ENCODE measurements at regions of chr6 and their contacts with region 1.

Region 1: DNA sequence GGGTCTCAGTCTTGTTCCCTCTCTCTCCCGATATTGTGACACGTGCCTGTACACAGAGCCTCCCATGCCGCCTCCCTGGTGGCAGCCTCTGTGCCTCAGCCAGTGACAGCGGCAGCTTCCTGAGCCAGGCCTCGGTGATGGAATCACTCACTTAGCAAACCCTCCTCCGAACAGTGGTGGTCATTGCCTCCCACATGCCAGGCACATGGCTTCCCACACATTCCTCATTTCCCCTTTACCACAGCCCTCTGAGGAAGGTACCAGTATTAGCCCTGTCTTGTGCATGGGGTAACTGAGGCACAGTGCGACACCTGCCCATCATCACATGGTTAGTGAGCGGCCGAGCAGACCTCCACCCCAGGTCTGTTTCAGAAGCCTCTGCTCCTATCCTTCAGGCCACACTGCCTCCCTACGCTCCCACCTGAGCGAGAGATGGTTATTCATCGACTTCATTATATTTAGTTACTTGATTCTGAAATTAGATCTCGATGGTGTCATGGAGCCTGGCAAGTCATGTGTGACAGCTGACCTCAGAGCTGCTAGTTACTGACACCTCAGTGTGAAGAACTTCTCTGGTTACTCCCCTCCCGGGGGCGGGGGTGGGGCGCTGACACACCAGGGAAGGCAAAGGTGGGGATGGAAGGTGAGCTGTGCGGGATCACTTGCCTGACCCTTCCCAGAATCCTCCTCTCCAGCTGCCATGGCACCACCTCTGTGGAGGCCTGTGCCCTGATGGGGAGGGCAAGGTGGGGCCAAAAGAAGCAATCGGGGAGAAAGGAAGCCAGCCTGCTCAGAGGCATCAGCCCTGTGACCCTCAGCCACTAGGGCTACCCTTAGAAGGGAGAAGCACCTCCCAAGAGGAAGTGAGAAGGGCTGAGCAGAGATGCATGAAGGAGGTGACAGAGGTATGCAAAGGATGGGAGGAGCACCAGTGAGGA is 17.9 kb downstream of the MDGA1 start:
- DNase-seq: no peak
- ATAC-seq: peak in 1 of 8 donors; percentile 11
- H3K4me3 ChIP-seq: no peak overlapping the region
- H3K27ac ChIP-seq: no peak overlapping the region
- H3K4me1 ChIP-seq: no peaks in the 10 kb centered on the region
- H3K27me3 ChIP-seq: no peaks in the 10 kb centered on the region
- CTCF ChIP-seq: no peak

Region 2: DNA sequence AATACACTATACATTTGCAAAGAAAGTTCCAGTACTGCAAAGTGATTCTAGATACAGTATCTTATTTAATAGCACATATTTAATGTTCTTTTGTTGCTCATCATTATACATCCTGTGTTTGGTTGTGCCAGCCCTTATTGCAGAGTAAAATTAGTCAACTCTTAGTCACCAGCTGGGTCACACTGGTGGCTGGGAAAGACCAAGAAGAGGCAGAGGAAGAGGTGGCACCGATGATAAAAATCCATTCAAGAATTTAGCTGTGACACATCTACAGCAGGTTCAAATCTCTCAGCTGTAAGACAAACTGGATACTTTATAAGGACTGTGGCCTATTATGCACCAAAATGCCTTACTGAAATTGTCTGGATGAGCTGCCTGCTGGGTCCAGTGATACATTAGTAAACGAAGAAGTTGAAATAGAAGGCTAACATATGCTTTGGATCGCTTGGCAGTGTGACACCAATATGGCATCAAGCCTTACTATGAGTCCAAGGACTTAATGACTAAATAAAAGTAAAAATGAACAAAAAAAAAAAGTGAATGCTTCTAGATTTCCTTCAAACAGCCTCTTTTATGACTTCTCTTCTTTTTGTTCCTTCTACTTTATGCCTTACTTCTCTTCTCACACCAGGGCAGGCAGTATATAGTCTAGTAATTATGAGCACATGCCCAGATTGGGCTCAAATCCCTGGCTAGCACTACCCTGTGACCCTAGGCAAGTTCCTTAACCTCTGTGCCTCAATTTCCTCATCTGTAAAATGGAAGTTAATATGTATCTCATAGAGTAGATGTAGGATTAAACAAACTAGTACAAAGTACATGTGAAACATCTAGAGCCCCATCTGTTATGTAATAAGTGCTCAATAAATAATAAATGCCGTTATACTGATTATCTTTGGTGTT is 355.4 kb before region 1 on chr6:
- intact Hi-C with region 1: loop called in 1 of 10 experiments (anchors 10 kb)
- DNase-seq: no peak
- ATAC-seq: no peak
- H3K4me3 ChIP-seq: no peak overlapping the region
- H3K27ac ChIP-seq: peak overlapping the region in 1 of 10 donors; percentile 15
- H3K4me1 ChIP-seq: peaks cover 0 to 44% (median 12%) of the 10 kb centered on the region in 9 donors
- H3K27me3 ChIP-seq: no peaks in the 10 kb centered on the region
- CTCF ChIP-seq: no peak

Region 3: DNA sequence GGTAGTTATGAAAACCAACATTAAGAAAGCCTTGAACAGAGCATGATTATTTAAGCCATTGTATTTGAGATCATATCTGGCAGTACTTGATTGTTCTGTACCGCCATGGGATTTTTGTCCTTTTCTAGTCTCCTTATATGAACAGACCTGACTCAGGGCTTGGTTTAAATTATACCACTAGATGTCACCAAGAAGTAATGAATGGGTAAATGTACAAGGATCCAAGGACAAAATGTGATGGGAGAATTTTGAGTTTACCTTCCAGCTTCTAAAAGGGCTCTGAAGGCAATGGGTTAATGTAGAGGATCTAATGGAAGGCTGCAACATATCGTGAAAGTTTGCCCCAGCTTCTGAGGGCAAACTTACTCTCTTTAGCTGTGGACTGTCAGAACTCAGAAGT is 314.0 kb before region 1 on chr6:
- intact Hi-C with region 1: loop called in 1 of 10 experiments (anchors 10 kb)
- DNase-seq: no peak
- ATAC-seq: peak in 6 of 8 donors; percentile 53 to 71 (median 68)
- H3K4me3 ChIP-seq: no peak overlapping the region
- H3K27ac ChIP-seq: peak overlapping the region in 1 of 10 donors; percentile 7
- H3K4me1 ChIP-seq: peaks cover 6 to 53% (median 31%) of the 10 kb centered on the region in 9 donors
- H3K27me3 ChIP-seq: no peaks in the 10 kb centered on the region
- CTCF ChIP-seq: peak in 8 of 9 donors; percentile 11 to 60 (median 40)

Region 4: DNA sequence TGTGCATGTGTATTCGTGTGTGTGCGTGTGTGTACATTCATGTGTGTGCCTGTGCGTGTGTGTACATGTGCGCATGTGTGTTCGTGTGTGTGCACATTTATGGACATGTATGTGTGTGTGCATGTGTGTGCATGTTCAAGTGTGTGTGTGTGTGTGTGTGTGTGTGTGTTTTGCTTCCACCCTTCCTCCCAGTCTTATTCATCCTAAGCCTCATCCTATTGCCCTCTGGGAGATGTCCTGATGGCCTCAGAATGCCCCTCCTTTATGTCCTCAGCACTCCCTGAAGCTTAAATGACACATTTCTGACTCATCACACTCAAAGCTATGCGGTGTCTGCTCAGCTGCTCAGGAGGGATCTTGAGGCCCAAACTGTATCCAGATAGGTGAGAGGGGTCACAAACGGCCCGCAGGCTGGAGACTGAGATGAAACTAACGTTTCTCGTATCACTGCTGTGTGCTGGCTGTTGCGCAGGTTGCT is 103.4 kb before region 1 on chr6:
- intact Hi-C with region 1: loop called in 2 of 10 experiments (anchors 10 kb)
- DNase-seq: no peak
- ATAC-seq: peak in 1 of 8 donors; percentile 17
- H3K4me3 ChIP-seq: no peak overlapping the region
- H3K27ac ChIP-seq: no peak overlapping the region
- H3K4me1 ChIP-seq: peaks cover 0 to 28% (median 12%) of the 10 kb centered on the region in 9 donors
- H3K27me3 ChIP-seq: peaks cover 0 to 15% (median 5%) of the 10 kb centered on the region in 7 donors
- CTCF ChIP-seq: no peak

Region 5: DNA sequence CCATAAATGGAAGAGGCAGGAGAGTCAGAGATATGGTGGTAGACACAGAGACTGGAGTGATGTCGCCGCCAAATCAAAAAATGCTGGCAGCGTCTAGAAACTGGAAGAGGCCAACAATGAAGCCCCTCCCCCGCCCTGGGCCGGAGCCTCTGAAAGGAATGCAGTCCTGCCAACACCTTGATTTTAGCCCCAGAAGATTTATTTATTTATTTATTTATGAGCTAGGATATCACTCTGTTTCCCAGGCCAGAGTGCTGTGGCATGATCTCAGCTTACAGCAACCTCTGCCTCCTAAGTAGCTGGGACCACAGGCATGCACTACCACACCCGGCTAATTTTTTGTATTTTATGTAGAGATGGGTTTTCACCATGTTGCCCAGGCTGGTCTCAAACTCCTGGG is 97.5 kb before region 1 on chr6:
- intact Hi-C with region 1: loop called in 2 of 10 experiments (anchors 10 kb)
- DNase-seq: no peak
- ATAC-seq: no peak
- H3K4me3 ChIP-seq: no peak overlapping the region
- H3K27ac ChIP-seq: no peak overlapping the region
- H3K4me1 ChIP-seq: peaks cover 0 to 34% (median 13%) of the 10 kb centered on the region in 9 donors
- H3K27me3 ChIP-seq: peaks cover 0 to 33% (median 7%) of the 10 kb centered on the region in 7 donors
- CTCF ChIP-seq: no peak

Region 6: DNA sequence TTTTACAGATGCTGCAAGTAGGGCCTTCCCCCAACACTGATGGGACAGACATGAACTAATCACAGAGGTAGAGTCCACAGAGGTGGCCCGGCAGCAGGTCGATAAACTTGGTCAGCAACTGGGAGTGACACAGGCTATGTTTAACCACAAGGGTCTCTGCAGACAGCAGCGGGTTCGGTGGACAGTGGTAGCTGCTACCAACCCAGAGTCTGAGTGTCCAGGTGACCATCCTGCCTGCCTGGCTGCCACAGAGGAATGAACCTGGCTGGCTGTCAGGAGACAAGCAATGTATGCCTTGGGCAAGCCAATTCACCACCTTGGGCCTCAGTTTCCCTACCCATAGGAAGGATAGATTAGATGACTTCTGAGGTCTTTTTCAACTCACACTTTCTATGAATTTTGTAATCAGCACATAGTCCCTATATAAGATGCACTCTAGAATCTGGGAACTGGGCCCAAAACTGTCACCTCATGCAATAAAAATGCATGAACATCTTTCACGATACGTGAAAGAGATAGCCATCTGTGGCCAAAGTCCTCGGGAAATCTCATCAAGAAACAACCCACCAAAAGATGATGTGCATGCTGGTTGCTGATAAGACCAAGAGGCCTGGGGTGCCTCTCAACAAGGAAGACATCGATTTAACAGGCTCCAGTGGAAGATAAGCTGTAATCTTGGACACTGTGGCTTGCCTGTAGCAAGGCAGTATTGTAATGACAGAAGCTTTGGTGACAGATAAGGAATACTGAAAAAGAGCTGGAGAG is 12.6 kb before region 1 on chr6:
- intact Hi-C with region 1: no loop called
- DNase-seq: no peak
- ATAC-seq: no peak
- H3K4me3 ChIP-seq: no peak overlapping the region
- H3K27ac ChIP-seq: no peak overlapping the region
- H3K4me1 ChIP-seq: peaks cover 0 to 12% (median 0%) of the 10 kb centered on the region in 9 donors
- H3K27me3 ChIP-seq: no peaks in the 10 kb centered on the region
- CTCF ChIP-seq: no peak

Region 7: DNA sequence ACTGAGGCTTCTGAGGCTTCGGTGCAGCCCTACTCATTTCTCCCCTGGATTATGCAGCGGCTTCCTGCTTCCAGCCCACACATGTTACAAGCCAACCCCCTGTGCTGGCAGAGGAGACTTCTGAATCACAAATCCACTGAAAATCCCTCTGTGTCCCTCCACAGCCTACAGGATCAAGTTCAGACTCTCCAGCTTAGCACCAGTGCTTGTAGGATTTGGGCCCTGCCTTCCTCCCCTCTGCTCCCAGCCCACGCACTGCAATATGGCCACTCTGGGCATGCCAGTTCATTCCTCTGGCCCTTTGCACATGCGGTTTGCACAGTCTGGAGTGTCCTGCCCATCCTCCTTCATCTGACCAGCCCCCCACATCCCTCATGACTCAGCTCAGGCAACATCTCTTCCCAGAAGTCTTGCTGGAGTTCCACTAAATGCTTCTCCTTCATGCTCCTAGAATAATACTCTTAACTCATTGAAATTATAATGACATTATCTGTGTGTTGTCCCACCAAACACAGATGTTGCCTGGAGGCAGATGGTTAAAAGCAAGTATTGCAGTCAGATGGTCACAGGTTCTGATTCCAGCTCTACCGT is 33.8 kb after region 1 on chr6:
- intact Hi-C with region 1: no loop called
- DNase-seq: no peak
- ATAC-seq: peak in 3 of 8 donors; percentile 18 to 43 (median 43)
- H3K4me3 ChIP-seq: no peak overlapping the region
- H3K27ac ChIP-seq: no peak overlapping the region
- H3K4me1 ChIP-seq: peaks cover 0 to 19% (median 0%) of the 10 kb centered on the region in 9 donors
- H3K27me3 ChIP-seq: no peaks in the 10 kb centered on the region
- CTCF ChIP-seq: no peak

Region 8: DNA sequence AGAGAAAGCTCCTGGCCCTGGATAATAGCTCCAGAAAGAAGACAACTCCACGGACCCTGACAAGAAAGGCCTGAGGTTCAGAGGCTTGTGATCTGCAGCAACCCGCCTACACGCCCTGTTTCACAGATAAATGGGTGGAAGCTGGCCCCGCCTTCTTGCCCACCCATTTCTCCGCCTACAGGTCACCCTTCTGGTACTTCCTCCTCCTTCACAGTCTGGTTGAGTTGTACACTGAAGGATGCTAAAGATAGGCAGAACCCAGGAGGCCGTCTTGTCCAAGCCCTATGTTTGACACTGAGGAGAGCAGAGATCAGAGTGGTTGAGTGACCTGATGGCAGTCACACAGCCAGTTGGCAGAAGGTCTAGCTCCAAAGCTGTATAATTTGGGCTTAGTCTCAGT is 52.1 kb after region 1 on chr6:
- intact Hi-C with region 1: loop called in 1 of 10 experiments (anchors 2 kb)
- DNase-seq: no peak
- ATAC-seq: no peak
- H3K4me3 ChIP-seq: no peak overlapping the region
- H3K27ac ChIP-seq: no peak overlapping the region
- H3K4me1 ChIP-seq: no peaks in the 10 kb centered on the region
- H3K27me3 ChIP-seq: peaks cover 0 to 3% (median 0%) of the 10 kb centered on the region in 7 donors
- CTCF ChIP-seq: no peak